Activated CD8-positive, alpha-beta memory T cell treated with anti-CD3 and anti-CD28 coated beads, Interleukin-2, amount 10 ng/mL, durations not matched to agents 7 days and 5 days (primary cell): ENCODE measurements at regions of chr9 and their contacts with region 1.

Region 1: DNA sequence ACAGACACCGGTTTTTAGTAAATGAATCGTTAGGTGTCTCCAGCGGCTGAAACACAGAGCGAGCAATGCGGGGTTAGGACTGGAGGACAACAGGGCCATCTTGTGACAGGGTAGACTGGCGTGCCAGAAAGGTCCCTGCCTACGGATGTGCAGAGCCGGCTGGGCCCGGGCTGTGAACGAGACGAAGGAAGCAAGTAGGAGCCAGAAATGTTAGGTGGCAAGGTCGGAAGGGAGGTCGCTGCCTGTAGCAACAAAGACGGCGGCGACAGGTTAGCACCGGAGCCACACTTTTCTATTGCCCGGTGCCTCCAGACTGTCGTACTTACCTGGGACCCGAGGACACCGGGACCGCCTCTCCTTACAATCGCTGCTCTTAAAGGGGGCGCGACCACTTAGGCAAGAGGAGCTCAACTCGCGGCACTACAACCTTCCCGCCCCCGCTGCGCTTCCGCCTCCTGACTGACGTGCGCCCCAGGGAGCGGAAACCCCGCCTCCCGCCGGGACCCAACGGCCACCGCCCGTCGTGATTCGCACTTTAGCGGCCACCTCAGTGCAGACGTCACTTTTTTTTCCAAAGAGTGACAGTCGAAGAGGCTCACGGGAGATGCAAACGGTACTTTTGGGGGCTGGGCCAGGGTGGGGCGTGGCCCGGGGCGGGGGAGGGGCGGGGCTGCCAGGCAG is at the start of gene INIP:
- DNase-seq: peak; percentile 99
- ATAC-seq: peak; percentile 95
- H3K4me3 Mint-ChIP-seq: peak within 1 kb of the TSS; percentile 85
- H3K27ac Mint-ChIP-seq: peak within 1 kb of the TSS; percentile 95
- H3K4me1 Mint-ChIP-seq: peaks cover 43% of the 10 kb centered on the region
- H3K27me3 Mint-ChIP-seq: no peaks in the 10 kb centered on the region
- total RNA-seq, gene INIP: 25.8 to 36.8 TPM

Region 2: DNA sequence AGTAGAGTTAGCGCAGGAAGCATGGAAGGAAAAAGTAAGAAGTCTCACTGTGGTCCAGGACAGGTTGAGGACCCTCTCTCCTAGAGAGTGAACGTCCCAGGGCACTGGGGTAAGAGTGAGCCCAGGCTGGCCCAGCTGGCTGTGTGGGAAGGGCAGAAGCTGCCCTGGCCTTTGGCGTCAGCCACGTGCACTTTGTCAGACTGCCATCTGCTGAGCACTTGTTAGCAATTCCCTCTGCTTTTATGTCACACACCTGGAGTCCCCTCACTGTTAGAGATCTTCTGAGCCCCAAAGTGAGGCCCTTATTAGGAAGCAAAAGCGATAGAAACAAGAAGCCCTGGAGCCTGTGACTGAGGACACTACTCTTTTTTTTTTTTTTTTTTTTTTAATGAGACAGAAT is 742.1 kb before region 1 on chr9:
- CTCF ChIA-PET with region 1: no interaction called
- DNase-seq: no peak
- ATAC-seq: peak; percentile 36
- H3K4me3 Mint-ChIP-seq: no peak overlapping the region
- H3K27ac Mint-ChIP-seq: no peak overlapping the region
- H3K4me1 Mint-ChIP-seq: no peaks in the 10 kb centered on the region
- H3K27me3 Mint-ChIP-seq: peaks cover 6% of the 10 kb centered on the region

Region 3: GRCh38 chr9:112379177-112380101 is 338.4 kb before region 1 on chr9:
- CTCF ChIA-PET with region 1: interaction called, 11 read pairs
- DNase-seq: peak; percentile 99
- ATAC-seq: peak; percentile 93
- H3K4me3 Mint-ChIP-seq: peak overlapping the region; percentile 90
- H3K27ac Mint-ChIP-seq: peak overlapping the region; percentile 99
- H3K4me1 Mint-ChIP-seq: peaks cover 50% of the 10 kb centered on the region
- H3K27me3 Mint-ChIP-seq: no peaks in the 10 kb centered on the region

Region 4: GRCh38 chr9:112443200-112443599 is 274.6 kb before region 1 on chr9:
- CTCF ChIA-PET with region 1: interaction called, 25 read pairs
- DNase-seq: no peak
- ATAC-seq: peak; percentile 68
- H3K4me3 Mint-ChIP-seq: no peak overlapping the region
- H3K27ac Mint-ChIP-seq: no peak overlapping the region
- H3K4me1 Mint-ChIP-seq: peaks cover 2% of the 10 kb centered on the region
- H3K27me3 Mint-ChIP-seq: no peaks in the 10 kb centered on the region

Region 5: DNA sequence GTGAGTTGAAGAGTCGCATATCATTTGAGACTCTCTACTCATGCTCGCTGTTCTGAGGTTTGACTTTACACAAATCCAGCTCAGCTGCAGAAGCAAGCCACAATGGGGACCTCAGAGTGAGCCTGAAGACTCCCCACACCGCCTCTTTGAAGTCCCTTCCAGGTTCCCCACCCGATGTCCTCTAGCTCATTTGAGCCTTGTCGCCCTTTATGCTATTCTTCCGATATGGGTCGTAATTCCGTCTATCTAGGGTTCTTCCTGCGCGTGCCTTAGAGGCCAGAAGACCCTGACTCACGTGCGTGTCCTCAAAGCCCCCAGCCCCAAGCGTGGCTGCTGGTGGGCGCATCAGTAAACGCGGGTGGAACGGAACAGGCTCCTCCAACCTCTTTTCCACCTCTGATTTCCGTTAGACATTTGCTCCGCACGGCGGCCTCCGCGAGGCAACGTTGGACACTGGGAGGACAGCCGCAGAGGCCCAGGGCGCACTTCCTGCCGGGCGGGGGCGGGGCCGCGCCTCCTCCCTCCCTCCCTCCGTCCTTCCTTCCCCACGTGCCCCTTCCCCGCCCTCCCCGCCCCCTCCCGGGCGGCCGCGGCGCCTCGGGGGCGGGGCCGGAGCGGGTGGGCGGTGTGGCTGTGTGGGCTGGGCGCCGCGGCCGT is 32.4 kb after region 1 on chr9 and contains the start of gene SNX30:
- CTCF ChIA-PET with region 1: interaction called, 29 read pairs
- DNase-seq: peak; percentile 84
- ATAC-seq: peak; percentile 71
- H3K4me3 Mint-ChIP-seq: peak within 1 kb of the TSS; percentile 82
- H3K27ac Mint-ChIP-seq: peak within 1 kb of the TSS; percentile 75
- H3K4me1 Mint-ChIP-seq: peaks cover 54% of the 10 kb centered on the region
- H3K27me3 Mint-ChIP-seq: peaks cover 23% of the 10 kb centered on the region
- total RNA-seq, gene SNX30: 2.3 to 3.6 TPM

Region 6: DNA sequence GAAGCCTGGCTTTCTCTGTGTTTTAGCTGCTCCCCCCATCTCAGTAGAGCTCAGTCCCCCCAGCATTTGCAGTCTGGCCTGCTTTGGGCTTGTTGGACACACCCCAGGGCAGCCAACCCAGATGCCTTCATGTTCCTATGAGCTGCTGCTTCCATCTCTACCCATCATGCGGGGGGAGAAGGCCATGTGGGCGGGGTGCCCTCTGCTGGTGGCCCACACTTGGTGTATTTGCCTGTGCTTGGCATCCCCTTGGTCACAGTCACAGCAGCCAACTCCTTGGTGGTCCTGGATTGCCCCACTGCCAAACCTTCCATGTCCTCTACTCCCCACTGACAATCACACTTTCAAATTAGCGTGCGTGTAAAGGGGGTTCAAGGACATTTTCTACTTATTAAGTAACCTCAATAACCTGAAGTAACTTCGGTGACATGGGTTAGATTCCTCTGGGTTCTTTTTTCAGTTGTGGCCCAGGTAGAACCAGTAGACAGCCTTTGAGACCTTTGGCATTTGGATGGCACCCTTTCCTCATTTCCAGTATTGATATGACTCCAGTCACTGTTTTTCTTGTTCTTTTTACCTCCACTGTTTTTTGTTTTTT is 75.5 kb after region 1 on chr9:
- CTCF ChIA-PET with region 1: interaction called, 20 read pairs
- DNase-seq: peak; percentile 90
- ATAC-seq: peak; percentile 99
- H3K4me3 Mint-ChIP-seq: no peak overlapping the region
- H3K27ac Mint-ChIP-seq: no peak overlapping the region
- H3K4me1 Mint-ChIP-seq: peaks cover 9% of the 10 kb centered on the region
- H3K27me3 Mint-ChIP-seq: no peaks in the 10 kb centered on the region

Region 7: GRCh38 chr9:113150670-113151611 is 433.1 kb after region 1 on chr9 and contains the start of gene SLC31A2:
- CTCF ChIA-PET with region 1: no interaction called
- DNase-seq: peak; percentile 91
- ATAC-seq: peak; percentile 97
- H3K4me3 Mint-ChIP-seq: peak within 1 kb of the TSS; percentile 73
- H3K27ac Mint-ChIP-seq: no peak within 1 kb of the TSS
- H3K4me1 Mint-ChIP-seq: peaks cover 25% of the 10 kb centered on the region
- H3K27me3 Mint-ChIP-seq: peaks cover 6% of the 10 kb centered on the region
- total RNA-seq, gene SLC31A2: 2.9 to 4.2 TPM